ENCODE measurements at regions of chr3 and their contacts with region 1.

Region 1: DNA sequence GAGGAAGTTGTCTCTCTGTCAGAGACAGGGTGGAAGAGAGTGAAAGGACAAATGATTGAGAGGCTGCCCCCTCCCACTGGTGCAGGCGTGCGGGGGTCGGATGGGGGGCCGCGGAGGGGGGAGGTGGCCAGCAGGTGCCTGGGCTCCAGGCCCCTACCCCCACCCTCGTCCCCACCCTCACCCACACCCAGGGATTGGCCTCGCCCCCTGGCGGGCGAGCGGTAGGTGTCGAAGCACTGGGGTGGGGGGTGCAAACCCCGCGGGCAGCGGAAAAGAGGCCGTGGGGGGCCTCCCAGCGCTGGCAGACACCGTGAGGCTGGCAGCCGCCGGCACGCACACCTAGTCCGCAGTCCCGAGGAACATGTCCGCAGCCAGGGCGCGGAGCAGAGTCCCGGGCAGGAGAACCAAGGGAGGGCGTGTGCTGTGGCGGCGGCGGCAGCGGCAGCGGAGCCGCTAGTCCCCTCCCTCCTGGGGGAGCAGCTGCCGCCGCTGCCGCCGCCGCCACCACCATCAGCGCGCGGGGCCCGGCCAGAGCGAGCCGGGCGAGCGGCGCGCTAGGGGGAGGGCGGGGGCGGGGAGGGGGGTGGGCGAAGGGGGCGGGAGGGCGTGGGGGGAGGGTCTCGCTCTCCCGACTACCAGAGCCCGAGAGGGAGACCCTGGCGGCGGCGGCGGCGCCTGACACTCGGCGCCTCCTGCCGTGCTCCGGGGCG is at the start of gene KAT2B:
- DNase-seq: peak; percentile 86
- ATAC-seq: peak; percentile 78
- H3K4me3 Mint-ChIP-seq: peak within 1 kb of the TSS; percentile 95
- H3K27ac Mint-ChIP-seq: peak within 1 kb of the TSS; percentile 94
- H3K4me1 Mint-ChIP-seq: peaks cover 53% of the 10 kb centered on the region
- H3K27me3 Mint-ChIP-seq: no peaks in the 10 kb centered on the region
- CTCF ChIP-seq: peak; percentile 21
- total RNA-seq, gene KAT2B: 35.9 and 36.8 TPM in 2 replicates

Region 2: GRCh38 chr3:19146685-19147650 is 893.0 kb before region 1 on chr3:
- CTCF ChIA-PET with region 1: no interaction called
- POLR2A ChIA-PET with region 1: no interaction called
- intact Hi-C with region 1: loop called (anchors 5 kb)
- DNase-seq: peak; percentile 64
- ATAC-seq: peak; percentile 73
- H3K4me3 Mint-ChIP-seq: peak overlapping the region; percentile 95
- H3K27ac Mint-ChIP-seq: peak overlapping the region; percentile 85
- H3K4me1 Mint-ChIP-seq: peaks cover 14% of the 10 kb centered on the region
- H3K27me3 Mint-ChIP-seq: peaks cover 9% of the 10 kb centered on the region
- CTCF ChIP-seq: no peak

Region 3: DNA sequence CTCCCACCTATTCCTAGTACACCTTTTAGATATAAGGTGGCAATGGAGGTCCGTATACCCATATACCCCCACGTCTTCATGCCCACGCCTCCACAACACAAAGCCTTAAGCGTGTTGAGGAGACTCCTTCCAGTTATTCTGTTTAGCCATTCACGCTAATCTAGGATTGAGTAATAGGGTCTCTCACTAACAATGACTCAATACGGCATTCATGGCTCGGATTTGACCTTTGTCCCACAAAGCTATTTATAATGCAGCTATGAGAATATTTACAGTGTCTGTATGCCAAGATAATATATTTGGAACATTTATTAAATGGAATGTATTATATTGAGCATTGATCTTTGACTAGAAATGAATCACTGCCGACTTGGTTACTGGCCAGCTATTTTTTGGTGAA is 675.8 kb before region 1 on chr3:
- CTCF ChIA-PET with region 1: no interaction called
- POLR2A ChIA-PET with region 1: interaction called, 4 read pairs
- intact Hi-C with region 1: loop called (anchors 5 kb)
- DNase-seq: no peak
- ATAC-seq: no peak
- H3K4me3 Mint-ChIP-seq: no peak overlapping the region
- H3K27ac Mint-ChIP-seq: peak overlapping the region; percentile 25
- H3K4me1 Mint-ChIP-seq: peaks cover 39% of the 10 kb centered on the region
- H3K27me3 Mint-ChIP-seq: no peaks in the 10 kb centered on the region
- CTCF ChIP-seq: no peak

Region 4: DNA sequence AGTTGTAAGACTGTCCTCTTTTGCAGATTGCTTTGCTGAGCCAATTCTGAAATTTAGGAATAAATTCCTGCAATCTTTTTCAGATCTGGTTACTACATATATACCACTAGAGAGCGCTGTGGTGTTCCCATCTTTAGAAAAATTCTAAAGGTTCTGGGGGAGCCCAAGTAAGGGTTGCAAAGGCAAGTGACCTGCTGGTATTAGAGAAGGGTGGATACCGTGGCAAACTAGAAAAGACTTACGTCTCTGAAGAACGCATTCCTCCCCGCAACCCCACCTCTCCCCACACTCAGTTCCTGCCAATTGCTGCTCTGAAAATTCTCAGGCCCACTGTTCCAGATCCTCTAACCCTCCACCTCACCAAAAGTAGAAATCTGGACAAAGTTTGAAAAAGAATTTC is 154.5 kb before region 1 on chr3:
- CTCF ChIA-PET with region 1: no interaction called
- POLR2A ChIA-PET with region 1: no interaction called
- intact Hi-C with region 1: loop called (anchors 1 kb)
- DNase-seq: no peak
- ATAC-seq: no peak
- H3K4me3 Mint-ChIP-seq: no peak overlapping the region
- H3K27ac Mint-ChIP-seq: no peak overlapping the region
- H3K4me1 Mint-ChIP-seq: no peaks in the 10 kb centered on the region
- H3K27me3 Mint-ChIP-seq: no peaks in the 10 kb centered on the region
- CTCF ChIP-seq: no peak

Region 5: GRCh38 chr3:20054549-20054987 is 14.6 kb after region 1 on chr3:
- CTCF ChIA-PET with region 1: interaction called, 6 read pairs
- POLR2A ChIA-PET with region 1: interaction called, 10 read pairs
- intact Hi-C with region 1: loop called (anchors 1 kb)
- DNase-seq: peak; percentile 22
- ATAC-seq: peak; percentile 92
- H3K4me3 Mint-ChIP-seq: no peak overlapping the region
- H3K27ac Mint-ChIP-seq: no peak overlapping the region
- H3K4me1 Mint-ChIP-seq: peaks cover 33% of the 10 kb centered on the region
- H3K27me3 Mint-ChIP-seq: no peaks in the 10 kb centered on the region
- CTCF ChIP-seq: no peak

Region 6: GRCh38 chr3:20066848-20067617 is 27.1 kb after region 1 on chr3:
- CTCF ChIA-PET with region 1: no interaction called
- POLR2A ChIA-PET with region 1: no interaction called
- intact Hi-C with region 1: no loop called
- DNase-seq: no peak
- ATAC-seq: no peak
- H3K4me3 Mint-ChIP-seq: no peak overlapping the region
- H3K27ac Mint-ChIP-seq: no peak overlapping the region
- H3K4me1 Mint-ChIP-seq: peaks cover 27% of the 10 kb centered on the region
- H3K27me3 Mint-ChIP-seq: no peaks in the 10 kb centered on the region
- CTCF ChIP-seq: no peak

Region 7: DNA sequence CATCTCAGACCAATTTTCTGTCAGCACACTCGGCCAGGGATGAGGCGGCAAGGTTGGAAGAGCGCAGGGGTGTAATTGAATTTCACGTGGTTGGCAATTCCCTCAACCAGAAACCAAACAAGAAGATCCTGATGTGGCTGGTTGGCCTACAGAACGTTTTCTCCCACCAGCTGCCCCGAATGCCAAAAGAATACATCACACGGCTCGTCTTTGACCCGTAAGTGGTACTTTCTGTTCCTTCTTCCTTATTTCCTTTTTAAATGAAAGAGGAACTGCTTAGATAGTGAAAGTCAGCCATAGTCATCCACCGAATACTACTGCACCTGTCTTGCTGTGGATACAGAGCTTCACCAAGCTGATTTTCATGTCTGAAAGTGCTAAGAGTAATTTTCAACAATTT is 86.0 kb after region 1 on chr3:
- CTCF ChIA-PET with region 1: interaction called, 3 read pairs
- POLR2A ChIA-PET with region 1: interaction called, 35 read pairs
- intact Hi-C with region 1: loop called (anchors 1 kb)
- DNase-seq: peak; percentile 39
- ATAC-seq: peak; percentile 95
- H3K4me3 Mint-ChIP-seq: peak overlapping the region; percentile 58
- H3K27ac Mint-ChIP-seq: peak overlapping the region; percentile 87
- H3K4me1 Mint-ChIP-seq: peaks cover 38% of the 10 kb centered on the region
- H3K27me3 Mint-ChIP-seq: no peaks in the 10 kb centered on the region
- CTCF ChIP-seq: no peak

Region 8: DNA sequence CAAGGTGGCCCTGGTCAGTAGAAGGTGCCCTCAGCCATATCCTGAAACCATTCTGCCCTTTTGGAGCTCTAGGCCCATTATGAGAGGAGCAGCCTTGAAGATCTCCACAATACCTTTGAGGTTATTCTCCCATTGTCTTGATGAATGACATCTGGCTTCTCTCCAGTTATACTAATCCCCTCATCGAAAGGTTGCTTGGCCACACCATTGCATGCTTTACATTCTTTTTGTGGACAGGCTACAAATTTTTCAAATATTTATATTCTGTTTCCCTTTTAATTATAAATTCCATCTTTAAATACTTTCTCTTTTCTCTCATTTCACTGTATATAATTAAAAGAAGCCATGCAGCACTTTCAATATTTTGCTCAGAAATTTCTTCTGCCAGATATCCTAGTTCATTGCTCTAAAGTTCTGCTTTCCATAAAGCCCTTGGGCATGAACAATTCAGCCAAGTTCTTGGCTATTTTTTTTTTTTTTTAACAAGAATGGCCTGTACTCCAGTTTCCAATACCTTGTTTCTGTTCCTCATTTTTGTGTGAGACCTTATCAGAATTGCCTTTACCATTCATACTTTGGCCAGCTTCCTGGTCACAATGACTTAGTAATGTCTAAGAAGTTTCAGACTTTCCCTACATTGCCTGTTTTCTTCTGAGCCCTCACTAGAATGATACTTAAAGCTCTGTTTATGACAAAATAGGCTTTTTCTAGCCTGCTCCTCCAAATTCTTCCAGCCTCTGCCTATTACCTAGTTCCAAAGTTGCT is 285.0 kb after region 1 on chr3:
- CTCF ChIA-PET with region 1: no interaction called
- POLR2A ChIA-PET with region 1: no interaction called
- intact Hi-C with region 1: loop called (anchors 5 kb)
- DNase-seq: no peak
- ATAC-seq: peak; percentile 34
- H3K4me3 Mint-ChIP-seq: no peak overlapping the region
- H3K27ac Mint-ChIP-seq: no peak overlapping the region
- H3K4me1 Mint-ChIP-seq: peaks cover 8% of the 10 kb centered on the region
- H3K27me3 Mint-ChIP-seq: no peaks in the 10 kb centered on the region
- CTCF ChIP-seq: no peak

Region 9: GRCh38 chr3:20340324-20340928 is 300.5 kb after region 1 on chr3:
- CTCF ChIA-PET with region 1: no interaction called
- POLR2A ChIA-PET with region 1: no interaction called
- intact Hi-C with region 1: no loop called
- DNase-seq: no peak
- ATAC-seq: peak; percentile 61
- H3K4me3 Mint-ChIP-seq: no peak overlapping the region
- H3K27ac Mint-ChIP-seq: no peak overlapping the region
- H3K4me1 Mint-ChIP-seq: peaks cover 12% of the 10 kb centered on the region
- H3K27me3 Mint-ChIP-seq: no peaks in the 10 kb centered on the region
- CTCF ChIP-seq: peak; percentile 42